AG04449 (cell line): ENCODE measurements at regions of chr2 and their contacts with region 1.

Region 1: DNA sequence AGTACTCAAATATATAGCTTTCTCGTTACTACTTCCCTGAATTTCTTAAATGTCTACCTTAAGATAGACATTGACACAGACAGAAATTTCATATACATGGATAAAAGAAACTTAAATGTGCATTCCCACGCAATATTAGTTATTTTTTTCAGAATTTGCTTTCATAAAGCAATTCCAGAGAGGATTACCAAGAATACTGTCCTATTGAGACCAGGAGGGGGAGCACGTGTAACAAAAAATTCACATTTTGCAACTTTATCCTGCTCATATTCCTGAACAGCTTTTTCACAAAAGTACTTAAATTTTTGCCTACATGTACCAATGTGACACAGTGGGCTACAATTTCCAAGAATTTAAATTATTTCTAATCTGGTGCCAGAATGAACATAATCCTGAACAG is 30.7 kb upstream of the ERCC3 start:
- DNase-seq: no peak
- H3K4me3 ChIP-seq: no peak overlapping the region
- CTCF ChIP-seq: peak; percentile 54

Region 2: GRCh38 chr2:127305990-127306585 is 18.5 kb before region 1 on chr2:
- CTCF ChIA-PET with region 1: interaction called, 21 read pairs
- POLR2A ChIA-PET with region 1: no interaction called
- DNase-seq: no peak
- H3K4me3 ChIP-seq: no peak overlapping the region
- CTCF ChIP-seq: no peak

Region 3: GRCh38 chr2:127342101-127342500 is 17.5 kb after region 1 on chr2:
- CTCF ChIA-PET with region 1: interaction called, 26 read pairs
- POLR2A ChIA-PET with region 1: no interaction called
- DNase-seq: no peak
- H3K4me3 ChIP-seq: no peak overlapping the region
- CTCF ChIP-seq: no peak

Region 4: DNA sequence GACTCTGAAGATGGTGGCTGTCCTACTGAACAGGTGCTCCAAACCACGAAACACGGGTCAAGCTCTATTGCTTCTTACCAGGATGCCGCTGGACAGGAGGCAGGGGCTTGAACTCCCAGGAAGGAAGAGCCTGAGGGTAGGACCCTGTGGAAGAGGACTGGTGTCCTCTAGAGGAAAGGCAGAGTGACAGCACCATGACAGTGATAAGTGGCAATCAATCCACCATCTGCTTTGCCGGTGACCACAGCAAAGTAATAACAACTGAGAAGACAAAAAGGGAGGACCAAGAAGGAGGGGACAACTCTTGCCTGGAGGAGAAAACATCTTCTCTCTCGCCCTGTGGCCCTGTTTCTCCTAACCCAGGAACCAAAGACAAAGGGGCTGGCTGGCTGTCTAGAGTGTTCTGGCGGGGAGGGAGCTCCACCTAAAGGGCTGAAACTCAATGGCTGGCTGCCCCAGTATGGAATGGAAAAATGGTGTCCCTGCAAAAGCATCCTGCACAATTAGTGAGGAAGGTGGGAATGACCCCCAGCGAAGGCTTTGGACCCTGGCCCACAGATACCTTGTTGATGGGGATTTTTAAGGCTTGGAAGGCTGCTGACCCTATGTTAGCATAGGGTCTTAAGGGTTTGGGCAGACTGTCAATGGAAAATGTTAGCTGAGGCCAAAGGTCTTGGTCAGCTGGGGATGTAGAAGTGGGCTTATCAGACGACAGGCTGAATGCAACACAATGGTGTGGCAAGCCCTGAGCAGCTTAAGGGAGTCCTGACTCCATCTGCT is 128.9 kb after region 1 on chr2:
- CTCF ChIA-PET with region 1: interaction called, 41 read pairs
- POLR2A ChIA-PET with region 1: no interaction called
- DNase-seq: no peak
- H3K4me3 ChIP-seq: no peak overlapping the region
- CTCF ChIP-seq: peak; percentile 11

Region 5: DNA sequence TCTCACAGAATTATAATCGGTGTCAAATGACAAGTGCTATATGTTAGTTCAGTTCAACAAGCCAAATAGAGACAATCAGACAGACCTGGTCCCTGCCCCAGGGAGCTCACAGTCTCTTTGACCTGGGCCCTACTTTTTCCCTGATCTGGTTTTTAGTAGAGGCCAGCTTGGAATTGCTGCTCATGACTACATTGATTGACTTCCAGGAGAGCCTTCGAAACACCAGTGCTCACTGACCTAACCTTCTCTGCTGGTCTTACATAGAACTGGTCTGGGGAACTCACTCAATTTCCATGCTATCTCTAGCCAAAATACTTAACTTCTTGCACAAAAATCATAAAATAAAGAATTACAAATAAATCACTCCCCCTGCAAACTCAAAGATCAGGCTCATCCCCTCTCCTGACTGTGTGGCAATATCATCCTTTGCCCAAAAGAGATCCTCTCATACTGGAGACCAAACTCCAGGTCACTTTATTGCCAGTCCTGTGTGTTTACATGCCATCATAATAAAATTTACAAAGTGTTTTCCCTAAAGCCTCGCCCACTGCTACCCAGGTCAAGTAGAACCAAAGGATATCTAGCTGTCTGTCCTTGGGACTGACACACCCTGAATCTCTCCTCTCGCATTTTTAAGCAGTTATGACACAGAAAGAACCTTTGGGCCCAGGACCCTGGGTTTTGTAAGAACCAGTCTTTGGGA is 146.8 kb after region 1 on chr2:
- CTCF ChIA-PET with region 1: interaction called, 29 read pairs
- POLR2A ChIA-PET with region 1: no interaction called
- DNase-seq: no peak
- H3K4me3 ChIP-seq: no peak overlapping the region
- CTCF ChIP-seq: no peak